AG04450 (cell line): ENCODE measurements at regions of chr5 and their contacts with region 1.

Region 1: GRCh38 chr5:10283927-10284635 is 23.6 kb downstream of the CMBL start:
- DNase-seq: no peak
- H3K4me3 ChIP-seq: no peak overlapping the region
- H3K27ac ChIP-seq: no peak overlapping the region
- H3K27me3 ChIP-seq: no peaks in the 10 kb centered on the region
- CTCF ChIP-seq: peak; percentile 99

Region 2: DNA sequence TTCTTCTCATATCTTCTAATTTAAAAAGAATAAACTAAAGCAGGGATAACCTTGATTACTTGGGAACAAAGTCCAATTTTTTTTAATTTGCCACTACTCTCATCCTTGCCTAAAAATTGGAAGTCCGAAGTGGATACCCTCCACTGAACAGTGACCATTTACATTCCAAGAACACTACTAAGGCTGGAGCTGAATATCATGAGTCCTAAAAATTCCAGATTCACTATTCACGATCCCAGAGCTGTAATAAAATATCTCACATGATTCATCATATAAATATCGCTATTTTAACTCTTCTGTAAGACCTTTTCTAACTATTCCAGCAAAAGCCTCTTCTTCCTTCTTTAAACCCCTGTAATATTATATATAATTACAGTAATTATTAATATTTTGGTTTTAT is 91.8 kb before region 1 on chr5:
- CTCF ChIA-PET with region 1: no interaction called
- POLR2A ChIA-PET with region 1: no interaction called
- DNase-seq: peak; percentile 45
- H3K4me3 ChIP-seq: no peak overlapping the region
- H3K27ac ChIP-seq: no peak overlapping the region
- H3K27me3 ChIP-seq: no peaks in the 10 kb centered on the region
- CTCF ChIP-seq: no peak

Region 3: DNA sequence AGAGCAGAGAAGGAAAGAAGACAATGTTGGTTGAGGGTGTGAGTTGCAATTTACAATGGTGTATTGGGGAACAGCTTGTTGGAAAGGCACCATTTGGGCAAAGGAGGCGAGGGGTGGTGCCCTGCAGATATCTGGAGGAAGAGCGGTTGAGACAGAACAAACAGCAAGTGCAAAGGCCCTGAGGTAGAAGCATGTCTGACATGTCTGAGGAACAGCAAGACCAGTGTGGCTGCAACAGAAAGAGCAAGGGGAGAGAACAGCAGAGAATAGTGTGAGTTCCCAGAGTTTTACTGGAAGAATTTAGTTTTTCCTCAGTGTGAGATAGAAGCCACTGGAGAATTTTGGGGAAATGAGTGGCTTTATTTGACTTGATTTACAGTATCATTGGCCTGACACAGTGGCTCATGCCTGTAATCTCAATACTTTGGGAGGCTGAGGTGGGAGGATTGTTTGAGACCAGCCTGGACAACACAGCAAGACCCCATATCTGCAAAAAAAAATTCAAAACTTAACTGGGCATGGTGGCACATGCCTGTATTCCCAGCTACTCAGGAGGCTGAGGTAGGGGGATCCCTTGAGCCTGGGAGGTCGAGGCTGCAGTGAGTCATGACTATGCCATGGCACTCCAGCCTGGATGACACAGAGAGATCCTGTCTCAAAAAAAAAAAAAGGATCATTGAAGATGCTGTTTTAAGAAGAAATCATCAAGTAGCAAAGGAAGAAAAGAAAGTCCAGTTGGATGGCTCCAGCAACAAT is 10.0 kb after region 1 on chr5:
- CTCF ChIA-PET with region 1: interaction called, 15 read pairs
- POLR2A ChIA-PET with region 1: interaction called, 3 read pairs
- DNase-seq: no peak
- H3K4me3 ChIP-seq: no peak overlapping the region
- H3K27ac ChIP-seq: no peak overlapping the region
- H3K27me3 ChIP-seq: no peaks in the 10 kb centered on the region
- CTCF ChIP-seq: no peak

Region 4: DNA sequence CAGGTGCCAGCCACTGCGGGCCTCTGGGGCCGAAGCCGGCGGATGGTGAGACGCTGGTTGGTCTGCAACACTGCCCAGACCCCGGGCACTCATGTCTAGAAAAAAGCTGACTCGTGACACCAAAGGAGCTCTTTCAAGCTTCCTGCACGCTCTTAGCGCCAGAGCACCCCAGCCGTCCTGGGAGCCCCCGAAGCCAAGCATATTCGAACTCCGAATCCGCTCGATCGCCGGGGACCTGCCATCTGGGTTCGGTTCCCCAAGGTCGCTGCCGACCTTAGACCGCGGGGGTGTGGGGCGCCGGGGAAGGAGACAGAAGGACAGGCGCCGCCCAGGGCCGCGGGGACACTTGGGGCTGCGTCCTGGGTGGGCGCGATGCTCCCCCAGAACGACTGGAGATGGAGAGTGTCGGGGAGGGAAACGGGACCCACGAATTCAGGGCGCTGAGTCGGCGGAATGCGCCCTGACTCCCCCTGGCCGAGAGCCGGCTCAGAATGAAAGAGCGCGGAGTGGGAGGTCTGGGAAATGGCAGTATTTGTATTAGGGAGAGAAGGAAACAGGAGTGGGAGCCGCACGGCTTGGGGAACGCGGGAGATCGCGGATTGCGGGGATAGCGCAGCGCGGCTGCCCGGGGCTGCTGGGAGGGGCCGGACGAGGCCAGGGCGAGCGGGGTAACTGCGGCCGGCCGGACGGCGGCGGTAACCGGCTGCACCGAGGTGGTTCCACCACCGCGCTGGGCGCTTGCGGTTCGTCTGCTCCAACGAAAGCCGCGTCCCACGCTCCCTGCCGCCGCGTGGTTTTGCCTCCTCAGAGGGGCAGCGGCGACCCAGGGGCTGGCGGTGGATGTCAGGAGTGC is 49.3 kb after region 1 on chr5:
- CTCF ChIA-PET with region 1: interaction called, 14 read pairs
- POLR2A ChIA-PET with region 1: interaction called, 3 read pairs
- DNase-seq: no peak
- H3K4me3 ChIP-seq: peak overlapping the region; percentile 60
- H3K27ac ChIP-seq: no peak overlapping the region
- H3K27me3 ChIP-seq: no peaks in the 10 kb centered on the region
- CTCF ChIP-seq: no peak

Region 5: DNA sequence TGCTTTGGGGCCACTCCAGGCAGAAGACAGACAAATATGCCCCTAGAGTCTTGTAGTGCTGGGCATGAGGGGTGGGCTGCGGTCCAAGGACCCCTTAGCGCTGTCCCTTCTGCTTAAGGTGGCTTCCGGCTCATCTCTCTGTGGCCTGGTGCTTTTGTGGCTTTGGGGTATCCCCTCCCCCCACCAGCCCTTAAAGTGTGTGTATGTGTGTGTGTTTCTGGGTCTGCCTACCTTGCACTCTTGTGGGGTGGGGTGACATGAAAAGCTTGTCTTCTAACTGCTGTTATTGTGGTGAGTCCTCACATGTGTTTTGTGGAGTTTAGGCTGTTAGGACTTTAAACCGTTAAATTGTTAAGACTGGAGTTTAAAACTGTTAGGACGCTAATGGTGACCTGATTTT is 93.0 kb after region 1 on chr5:
- CTCF ChIA-PET with region 1: interaction called, 13 read pairs
- POLR2A ChIA-PET with region 1: no interaction called
- DNase-seq: no peak
- H3K4me3 ChIP-seq: no peak overlapping the region
- H3K27ac ChIP-seq: no peak overlapping the region
- H3K27me3 ChIP-seq: no peaks in the 10 kb centered on the region
- CTCF ChIP-seq: no peak

Region 6: GRCh38 chr5:10418654-10419345 is 134.7 kb after region 1 on chr5:
- CTCF ChIA-PET with region 1: interaction called, 84 read pairs
- POLR2A ChIA-PET with region 1: no interaction called
- DNase-seq: no peak
- H3K4me3 ChIP-seq: no peak overlapping the region
- H3K27ac ChIP-seq: no peak overlapping the region
- H3K27me3 ChIP-seq: no peaks in the 10 kb centered on the region
- CTCF ChIP-seq: no peak

Region 7: GRCh38 chr5:10441083-10441991 is 157.3 kb after region 1 on chr5 and contains the start of gene ROPN1L:
- CTCF ChIA-PET with region 1: interaction called, 13 read pairs
- POLR2A ChIA-PET with region 1: no interaction called
- DNase-seq: peak; percentile 56
- H3K4me3 ChIP-seq: peak within 1 kb of the TSS; percentile 73
- H3K27ac ChIP-seq: peak within 1 kb of the TSS; percentile 66
- H3K27me3 ChIP-seq: no peaks in the 10 kb centered on the region
- CTCF ChIP-seq: no peak
- polyA plus RNA-seq, gene ROPN1L: 0.24 and 0.29 TPM in 2 replicates

Region 8: GRCh38 chr5:10467240-10468198 is 183.4 kb after region 1 on chr5:
- CTCF ChIA-PET with region 1: no interaction called
- POLR2A ChIA-PET with region 1: no interaction called
- DNase-seq: no peak
- H3K4me3 ChIP-seq: no peak overlapping the region
- H3K27ac ChIP-seq: peak overlapping the region; percentile 52
- H3K27me3 ChIP-seq: peaks cover 3% of the 10 kb centered on the region
- CTCF ChIP-seq: no peak